HepG2 (cell line): ENCODE measurements at regions of chr2 and their contacts with region 1.

Region 1: DNA sequence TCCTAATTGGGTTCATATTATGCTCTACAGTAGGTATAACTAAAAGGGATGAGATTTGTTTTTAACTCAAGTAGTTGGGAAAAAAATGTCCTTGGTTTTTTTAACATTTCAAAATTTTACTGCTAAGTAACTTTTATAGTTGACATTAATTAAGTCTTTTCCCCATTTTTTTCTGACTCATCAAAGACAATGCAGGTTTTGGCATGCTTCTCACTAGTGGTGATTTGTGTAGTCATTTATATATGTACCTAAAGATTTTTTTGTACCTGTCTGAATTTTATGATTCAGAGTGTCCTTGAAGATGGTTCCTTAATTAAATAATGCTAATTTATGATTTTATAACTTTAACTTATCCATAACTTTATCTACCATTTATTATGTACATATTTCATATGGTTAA is 882.3 kb upstream of the TMEFF2 start:
- DNase-seq: no peak
- ATAC-seq: no peak
- H3K4me3 ChIP-seq: no peak overlapping the region
- H3K27ac ChIP-seq: no peak overlapping the region
- H3K4me1 ChIP-seq: no peaks in the 10 kb centered on the region
- H3K27me3 ChIP-seq: no peaks in the 10 kb centered on the region
- CTCF ChIP-seq: no peak
- EP300 ChIP-seq: no peak
- POLR2A ChIP-seq: no peak
- RAD21 ChIP-seq: no peak

Region 2: DNA sequence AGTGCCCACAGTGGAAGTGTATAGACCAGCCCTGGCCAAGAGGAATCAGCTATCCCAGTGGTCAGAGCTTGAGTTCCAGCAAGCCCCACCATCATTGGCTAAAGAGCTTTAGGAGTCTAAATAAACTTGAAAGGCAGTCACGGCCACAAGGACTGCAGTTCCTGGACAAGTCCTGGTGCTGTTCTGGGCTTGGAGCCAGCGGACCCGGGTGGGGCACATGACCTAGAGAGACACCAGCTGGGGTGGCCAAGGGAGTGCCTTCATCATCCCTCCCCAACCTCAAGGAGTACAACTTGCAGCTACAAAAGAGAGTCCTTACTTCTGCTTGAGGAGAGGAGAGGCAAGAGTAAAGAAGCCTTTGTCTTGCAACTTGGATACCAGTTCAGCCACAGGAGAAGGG is 442.4 kb before region 1 on chr2:
- CTCF ChIA-PET with region 1: no interaction called
- POLR2A ChIA-PET with region 1: no interaction called
- in situ Hi-C with region 1: no loop called
- intact Hi-C with region 1: no loop called
- DNase-seq: no peak
- ATAC-seq: no peak
- H3K4me3 ChIP-seq: no peak overlapping the region
- H3K27ac ChIP-seq: no peak overlapping the region
- H3K4me1 ChIP-seq: no peaks in the 10 kb centered on the region
- H3K27me3 ChIP-seq: no peaks in the 10 kb centered on the region
- CTCF ChIP-seq: no peak
- EP300 ChIP-seq: no peak
- POLR2A ChIP-seq: no peak
- RAD21 ChIP-seq: no peak

Region 3: DNA sequence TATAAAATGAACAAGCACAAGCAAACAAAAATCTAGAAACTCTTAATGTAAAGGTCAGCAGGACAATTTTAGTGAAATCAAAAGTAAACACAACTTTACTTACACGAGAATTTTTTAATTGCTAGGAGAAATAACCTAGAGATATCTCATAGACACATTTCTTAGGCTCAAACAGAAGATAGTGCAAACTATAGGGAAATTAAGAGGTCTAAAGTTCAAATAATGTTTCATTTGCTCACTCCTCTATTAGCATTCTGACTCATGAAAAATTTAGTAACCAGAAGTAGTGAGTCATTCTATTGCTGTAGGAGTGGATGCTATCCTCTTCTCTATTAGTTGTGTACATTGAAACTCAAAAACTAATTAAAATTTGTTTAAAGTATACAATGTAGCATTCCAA is 26.0 kb after region 1 on chr2:
- CTCF ChIA-PET with region 1: no interaction called
- POLR2A ChIA-PET with region 1: no interaction called
- in situ Hi-C with region 1: no loop called
- intact Hi-C with region 1: loop called (anchors 2 kb)
- DNase-seq: peak; percentile 2
- ATAC-seq: no peak
- H3K4me3 ChIP-seq: no peak overlapping the region
- H3K27ac ChIP-seq: no peak overlapping the region
- H3K4me1 ChIP-seq: no peaks in the 10 kb centered on the region
- H3K27me3 ChIP-seq: no peaks in the 10 kb centered on the region
- CTCF ChIP-seq: no peak
- EP300 ChIP-seq: no peak
- POLR2A ChIP-seq: no peak
- RAD21 ChIP-seq: no peak

Region 4: DNA sequence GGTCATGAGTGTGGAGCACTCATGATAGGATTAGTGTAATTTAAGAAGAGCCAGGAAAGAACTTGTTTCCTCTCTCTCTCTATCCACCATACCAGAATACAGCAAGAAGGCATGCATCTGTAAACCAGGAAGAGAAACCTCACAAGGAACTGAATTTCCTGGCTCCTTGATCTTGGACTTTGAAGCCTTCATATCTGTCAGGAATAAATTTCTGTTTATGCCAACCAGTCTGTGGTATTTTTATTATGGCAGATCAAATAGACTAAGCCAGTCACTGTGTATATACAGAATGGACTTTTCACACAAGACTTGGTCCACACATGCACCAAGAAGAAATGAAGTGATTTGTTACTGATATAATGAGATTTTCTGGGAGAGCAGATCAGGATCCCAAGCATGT is 47.8 kb after region 1 on chr2:
- CTCF ChIA-PET with region 1: no interaction called
- POLR2A ChIA-PET with region 1: no interaction called
- in situ Hi-C with region 1: no loop called
- intact Hi-C with region 1: no loop called
- DNase-seq: no peak
- ATAC-seq: no peak
- H3K4me3 ChIP-seq: no peak overlapping the region
- H3K27ac ChIP-seq: no peak overlapping the region
- H3K4me1 ChIP-seq: no peaks in the 10 kb centered on the region
- H3K27me3 ChIP-seq: no peaks in the 10 kb centered on the region
- CTCF ChIP-seq: no peak
- EP300 ChIP-seq: no peak
- POLR2A ChIP-seq: no peak
- RAD21 ChIP-seq: no peak

Region 5: GRCh38 chr2:193199322-193199721 is 122.3 kb after region 1 on chr2:
- CTCF ChIA-PET with region 1: no interaction called
- POLR2A ChIA-PET with region 1: no interaction called
- in situ Hi-C with region 1: no loop called
- intact Hi-C with region 1: no loop called
- DNase-seq: no peak
- ATAC-seq: no peak
- H3K4me3 ChIP-seq: no peak overlapping the region
- H3K27ac ChIP-seq: no peak overlapping the region
- H3K4me1 ChIP-seq: no peaks in the 10 kb centered on the region
- H3K27me3 ChIP-seq: 0 out of 5 replicates have a peak, but pooled peaks cover 0 to 1% of the 10 kb centered on the region in 2 experiments
- CTCF ChIP-seq: no peak
- EP300 ChIP-seq: no peak
- POLR2A ChIP-seq: no peak
- RAD21 ChIP-seq: no peak

Region 6: GRCh38 chr2:194301946-194302345 is 1225.0 kb after region 1 on chr2:
- CTCF ChIA-PET with region 1: no interaction called
- POLR2A ChIA-PET with region 1: no interaction called
- in situ Hi-C with region 1: no loop called
- intact Hi-C with region 1: no loop called
- DNase-seq: no peak
- ATAC-seq: no peak
- H3K4me3 ChIP-seq: no peak overlapping the region
- H3K27ac ChIP-seq: no peak overlapping the region
- H3K4me1 ChIP-seq: no peaks in the 10 kb centered on the region
- H3K27me3 ChIP-seq: no peaks in the 10 kb centered on the region
- CTCF ChIP-seq: no peak
- EP300 ChIP-seq: no peak
- POLR2A ChIP-seq: no peak
- RAD21 ChIP-seq: no peak